ENCODE measurements at regions of chr20 and their contacts with region 1.

Region 1: DNA sequence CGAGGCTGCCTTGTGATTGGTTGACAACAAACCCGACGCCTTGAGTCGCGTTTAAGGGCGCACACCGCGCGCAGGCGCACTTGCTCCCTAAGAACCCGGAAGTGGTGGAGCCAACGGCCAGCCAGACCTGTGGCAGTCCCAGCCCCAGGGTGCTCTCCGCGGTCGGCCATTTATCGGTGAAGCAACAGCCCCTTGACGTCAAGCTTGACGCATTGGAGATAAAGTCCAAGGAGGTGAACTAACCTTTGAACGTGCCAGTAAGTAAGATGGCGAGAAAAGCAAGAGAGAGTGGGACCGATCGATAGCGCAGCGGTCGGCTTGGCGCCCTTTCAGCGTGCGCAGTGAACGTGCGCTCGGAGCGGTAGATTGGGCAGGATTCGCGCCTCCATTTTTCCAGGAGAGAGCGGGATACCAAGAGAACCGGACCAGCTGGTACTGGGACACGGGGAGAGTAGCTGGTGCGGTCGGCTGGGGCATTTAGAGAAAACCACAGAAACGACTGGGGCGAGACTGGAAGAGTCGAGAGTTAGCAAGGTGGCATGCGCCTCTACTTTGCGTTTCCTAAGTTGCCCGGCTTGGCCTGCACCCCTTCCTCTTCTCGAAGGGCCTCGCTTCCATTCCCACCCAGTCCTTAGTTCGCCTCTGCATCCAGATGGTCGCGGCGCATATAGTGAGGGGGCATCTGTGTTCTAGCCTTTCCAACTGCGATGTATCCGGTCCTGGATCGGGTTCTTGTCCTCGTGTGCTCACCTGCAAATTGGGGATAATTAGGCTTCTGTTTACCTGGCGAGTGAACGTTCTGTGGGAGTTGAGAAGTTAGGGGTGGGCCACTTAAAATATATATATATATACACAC is at the start of gene CSTF1:
- DNase-seq: peak; percentile 98
- ATAC-seq: peak; percentile 94
- H3K4me3 Mint-ChIP-seq: no peak within 1 kb of the TSS
- H3K27ac Mint-ChIP-seq: no peak within 1 kb of the TSS
- H3K4me1 Mint-ChIP-seq: peaks cover 35% of the 10 kb centered on the region
- H3K27me3 Mint-ChIP-seq: no peaks in the 10 kb centered on the region
- total RNA-seq, gene CSTF1: 55.7 to 58.3 TPM

Region 2: GRCh38 chr20:56358596-56359211 is 33.8 kb before region 1 on chr20 and contains the start of gene FAM210B:
- POLR2A ChIA-PET with region 1: interaction called, 13 read pairs
- DNase-seq: peak; percentile 87
- ATAC-seq: peak; percentile 100
- H3K4me3 Mint-ChIP-seq: peak within 1 kb of the TSS; percentile 87
- H3K27ac Mint-ChIP-seq: peak within 1 kb of the TSS; percentile 58
- H3K4me1 Mint-ChIP-seq: peaks cover 14% of the 10 kb centered on the region
- H3K27me3 Mint-ChIP-seq: peaks cover 10% of the 10 kb centered on the region
- total RNA-seq, gene FAM210B: 10.9 to 13.6 TPM

Region 3: GRCh38 chr20:56411759-56412472 is 19.4 kb after region 1 on chr20 and contains the start of gene CASS4:
- POLR2A ChIA-PET with region 1: interaction called, 49 read pairs
- DNase-seq: peak; percentile 53
- ATAC-seq: peak; percentile 79
- H3K4me3 Mint-ChIP-seq: peak within 1 kb of the TSS; percentile 95
- H3K27ac Mint-ChIP-seq: peak within 1 kb of the TSS; percentile 98
- H3K4me1 Mint-ChIP-seq: peaks cover 47% of the 10 kb centered on the region
- H3K27me3 Mint-ChIP-seq: no peaks in the 10 kb centered on the region
- total RNA-seq, gene CASS4: 14.2 to 18.7 TPM

Region 4: DNA sequence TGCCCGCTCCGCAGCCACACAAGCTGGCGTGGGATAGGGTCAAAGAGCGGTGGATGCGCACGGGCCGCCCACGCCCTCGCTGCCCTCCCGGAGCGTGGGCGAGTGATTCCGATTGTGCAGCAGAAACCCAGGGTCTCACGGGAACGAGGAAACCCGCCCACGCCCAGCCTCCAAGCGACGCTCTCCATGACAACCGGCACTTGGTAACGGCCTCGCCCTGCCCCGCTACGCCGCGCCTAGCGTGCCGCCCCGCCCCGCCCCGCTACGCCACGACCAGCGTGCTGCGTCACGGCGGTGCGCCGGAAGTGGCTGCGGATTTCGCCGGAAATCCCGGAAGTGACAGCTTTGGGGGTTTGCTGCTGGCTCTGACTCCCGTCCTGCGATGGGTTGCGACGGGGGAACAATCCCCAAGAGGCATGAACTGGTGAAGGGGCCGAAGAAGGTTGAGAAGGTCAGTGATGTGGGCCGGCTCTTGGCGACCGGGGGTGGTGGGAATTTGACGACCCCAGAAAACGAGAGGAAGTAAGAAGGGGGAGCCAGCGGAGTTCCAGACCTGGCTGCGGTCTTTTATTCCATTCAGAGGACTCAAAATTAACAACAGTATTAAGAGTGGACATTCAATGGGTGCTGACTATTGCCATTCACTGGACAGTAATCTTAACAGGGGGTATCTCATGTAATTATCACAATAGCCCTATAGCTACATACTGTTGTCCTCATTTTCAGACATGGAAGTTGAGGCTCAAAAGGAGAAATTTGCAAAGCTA is 76.0 kb after region 1 on chr20 and contains the start of gene RTF2:
- POLR2A ChIA-PET with region 1: interaction called, 15 read pairs
- DNase-seq: peak; percentile 99
- ATAC-seq: peak; percentile 94
- H3K4me3 Mint-ChIP-seq: peak within 1 kb of the TSS; percentile 100
- H3K27ac Mint-ChIP-seq: peak within 1 kb of the TSS; percentile 99
- H3K4me1 Mint-ChIP-seq: peaks cover 31% of the 10 kb centered on the region
- H3K27me3 Mint-ChIP-seq: no peaks in the 10 kb centered on the region
- total RNA-seq, gene RTF2: 99.8 to 101 TPM

Region 5: DNA sequence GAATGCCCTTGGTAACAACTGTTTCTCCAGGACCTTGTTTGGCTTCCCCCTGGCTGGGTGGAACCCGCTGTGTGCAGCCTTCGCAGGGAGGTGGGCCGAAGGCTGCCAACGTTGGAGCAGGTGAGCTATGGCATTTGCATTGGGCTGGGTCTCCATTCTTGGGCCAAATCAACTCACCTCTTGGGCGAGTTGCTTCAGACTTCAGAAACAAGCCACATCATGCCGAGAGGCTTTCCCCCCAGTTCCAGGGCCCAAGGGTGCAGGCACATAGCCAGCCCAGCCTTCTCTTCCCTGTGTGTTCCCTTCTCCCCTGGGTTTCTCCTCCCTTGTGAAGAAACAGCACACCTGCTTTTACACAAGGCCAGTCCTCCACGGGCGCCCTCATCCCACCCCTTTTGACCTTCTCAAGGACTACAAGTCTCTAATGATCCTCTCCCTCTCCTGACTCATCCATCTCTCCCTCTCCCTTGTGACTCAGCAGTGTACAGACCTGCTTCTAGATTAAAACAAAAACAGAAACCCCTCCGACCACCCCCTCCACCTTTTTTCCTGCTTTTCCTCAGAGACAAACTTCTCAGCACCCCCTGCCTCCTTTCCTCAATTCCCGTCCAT is 182.1 kb after region 1 on chr20:
- POLR2A ChIA-PET with region 1: no interaction called
- DNase-seq: no peak
- ATAC-seq: no peak
- H3K4me3 Mint-ChIP-seq: no peak overlapping the region
- H3K27ac Mint-ChIP-seq: no peak overlapping the region
- H3K4me1 Mint-ChIP-seq: no peaks in the 10 kb centered on the region
- H3K27me3 Mint-ChIP-seq: peaks cover 3% of the 10 kb centered on the region